Naive thymus-derived CD4-positive, alpha-beta T cell (primary cell): ENCODE measurements at regions of chr11 and their contacts with region 1.

Region 1: GRCh38 chr11:47161134-47161854 is 15.4 kb downstream of the ARFGAP2 start:
- DNase-seq: peak; percentile 43 to 73 (median 63)
- ATAC-seq: peak; percentile 86
- H3K4me3 ChIP-seq: no peak overlapping the region
- H3K4me3 Mint-ChIP-seq: no peak overlapping the region
- H3K27ac ChIP-seq: no peak overlapping the region
- H3K27ac Mint-ChIP-seq: peak overlapping the region in 5 of 9 donors; percentile 38 to 72 (median 40)
- H3K4me1 ChIP-seq: peaks cover 0 to 6% of the 10 kb centered on the region in 2 donors
- H3K4me1 Mint-ChIP-seq: peaks cover 0 to 9% (median 3%) of the 10 kb centered on the region in 7 donors
- H3K27me3 ChIP-seq: no peaks in the 10 kb centered on the region
- H3K27me3 Mint-ChIP-seq: no peaks in the 10 kb centered on the region

Region 2: DNA sequence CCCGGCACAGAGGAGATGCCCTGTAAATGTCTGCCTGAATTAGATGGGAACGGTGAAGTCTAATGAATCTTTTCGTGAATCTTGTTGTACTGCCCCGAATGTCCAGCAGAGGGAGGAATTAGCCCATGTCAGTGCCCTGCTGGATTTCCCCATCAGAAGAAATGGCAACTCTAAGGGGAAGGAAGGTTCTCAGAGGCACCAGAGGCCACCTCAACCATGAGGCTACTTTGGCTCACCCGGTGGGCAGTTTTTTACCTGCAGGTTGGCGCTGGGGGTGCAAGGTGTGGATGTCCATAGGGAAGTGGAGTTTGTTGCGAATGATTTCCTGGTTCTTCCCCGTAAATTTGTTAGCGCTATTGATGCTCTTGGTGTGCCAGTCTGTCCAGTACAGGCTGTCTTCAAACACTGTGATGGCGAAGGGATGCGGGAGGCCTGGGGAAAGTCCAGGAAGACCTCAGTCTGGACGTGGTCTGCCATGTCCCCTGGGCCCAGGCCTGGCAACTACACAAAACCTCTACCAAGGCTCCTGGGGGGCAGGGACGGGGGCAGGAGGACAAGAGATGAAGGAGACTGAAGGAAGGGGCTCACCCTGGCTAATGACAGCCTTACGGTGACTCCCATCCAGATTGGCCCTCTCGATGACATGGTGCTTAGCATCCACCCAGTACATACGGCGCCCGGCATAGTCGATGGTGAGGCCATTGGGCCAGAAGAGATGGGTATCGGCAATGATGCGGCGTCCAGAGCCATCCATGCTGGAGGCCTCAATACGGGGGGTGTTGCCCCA is 271.4 kb before region 1 on chr11:
- CTCF ChIA-PET with region 1: interaction called, 34 read pairs
- POLR2A ChIA-PET with region 1: no interaction called
- intact Hi-C with region 1: loop called (anchors 1 kb)
- DNase-seq: peak; percentile 40 to 80 (median 72)
- ATAC-seq: peak; percentile 95
- H3K4me3 ChIP-seq: no peak overlapping the region
- H3K4me3 Mint-ChIP-seq: no peak overlapping the region
- H3K27ac ChIP-seq: no peak overlapping the region
- H3K27ac Mint-ChIP-seq: no peak overlapping the region
- H3K4me1 ChIP-seq: no peaks in the 10 kb centered on the region
- H3K4me1 Mint-ChIP-seq: peaks cover 0 to 6% (median 0%) of the 10 kb centered on the region in 7 donors
- H3K27me3 ChIP-seq: no peaks in the 10 kb centered on the region
- H3K27me3 Mint-ChIP-seq: peaks cover 0 to 7% (median 0%) of the 10 kb centered on the region in 5 donors

Region 3: GRCh38 chr11:46920755-46921154 is 240.5 kb before region 1 on chr11:
- CTCF ChIA-PET with region 1: interaction called, 4 read pairs
- POLR2A ChIA-PET with region 1: no interaction called
- intact Hi-C with region 1: loop called in 1 of 2 experiments (anchors 1 kb)
- DNase-seq: no peak
- ATAC-seq: no peak
- H3K4me3 ChIP-seq: no peak overlapping the region
- H3K4me3 Mint-ChIP-seq: no peak overlapping the region
- H3K27ac ChIP-seq: no peak overlapping the region
- H3K27ac Mint-ChIP-seq: no peak overlapping the region
- H3K4me1 ChIP-seq: peaks cover 13% of the 10 kb centered on the region in 2 donors
- H3K4me1 Mint-ChIP-seq: peaks cover 20 to 31% (median 25%) of the 10 kb centered on the region in 7 donors
- H3K27me3 ChIP-seq: peaks cover 4 to 18% of the 10 kb centered on the region in 2 donors
- H3K27me3 Mint-ChIP-seq: peaks cover 30 to 49% (median 36%) of the 10 kb centered on the region in 5 donors

Region 4: GRCh38 chr11:47121056-47121455 is 40.2 kb before region 1 on chr11:
- CTCF ChIA-PET with region 1: no interaction called
- POLR2A ChIA-PET with region 1: no interaction called
- intact Hi-C with region 1: no loop called
- DNase-seq: no peak
- ATAC-seq: no peak
- H3K4me3 ChIP-seq: no peak overlapping the region
- H3K4me3 Mint-ChIP-seq: no peak overlapping the region
- H3K27ac ChIP-seq: no peak overlapping the region
- H3K27ac Mint-ChIP-seq: peak overlapping the region in 1 of 9 donors; percentile 56
- H3K4me1 ChIP-seq: no peaks in the 10 kb centered on the region
- H3K4me1 Mint-ChIP-seq: peaks cover 0 to 18% (median 7%) of the 10 kb centered on the region in 7 donors
- H3K27me3 ChIP-seq: no peaks in the 10 kb centered on the region
- H3K27me3 Mint-ChIP-seq: peaks cover 0 to 7% (median 0%) of the 10 kb centered on the region in 5 donors